ENCODE measurements at regions of chrX and their contacts with region 1.

Region 1: DNA sequence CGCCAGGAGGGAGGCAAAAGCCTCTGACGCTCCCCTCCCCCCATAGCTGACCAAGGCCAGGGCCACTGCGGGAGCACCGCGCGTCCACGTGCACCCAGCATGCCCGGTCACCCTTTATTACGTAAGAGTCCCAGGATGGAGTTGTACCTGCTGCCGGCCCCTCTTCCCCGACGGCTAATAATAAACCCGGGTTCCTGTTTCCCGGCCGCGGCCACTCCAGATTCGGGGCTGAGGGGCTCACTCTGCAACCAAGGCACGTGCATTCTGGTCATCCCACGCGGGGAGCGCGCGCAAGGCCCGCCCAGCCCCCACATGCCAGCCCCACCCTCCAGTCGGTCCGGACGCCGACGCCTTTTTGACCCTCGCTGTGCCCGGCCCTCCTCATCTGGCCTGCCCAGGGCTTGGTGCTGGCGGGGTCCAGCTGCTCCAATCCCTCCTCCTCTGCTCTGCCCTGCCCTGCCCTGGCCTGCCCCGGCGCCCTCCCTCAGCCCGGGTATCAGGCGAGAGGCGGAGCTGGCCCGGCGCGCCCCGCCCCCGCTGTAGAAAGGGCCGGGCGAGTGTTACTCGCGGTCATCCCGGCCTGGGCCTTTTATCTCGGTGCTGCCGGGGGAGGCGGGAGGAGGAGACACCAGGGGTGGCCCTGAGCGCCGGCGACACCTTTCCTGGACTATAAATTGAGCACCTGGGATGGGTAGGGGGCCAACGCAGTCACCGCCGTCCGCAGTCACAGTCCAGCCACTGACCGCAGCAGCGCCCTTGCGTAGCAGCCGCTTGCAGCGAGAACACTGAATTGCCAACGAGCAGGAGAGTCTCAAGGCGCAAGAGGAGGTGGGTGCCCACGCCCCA is 2.5 kb downstream of the MID1IP1 start:
- DNase-seq: peak; percentile 79
- H3K4me3 ChIP-seq: peak overlapping the region; percentile 57 to 76 (median 64)
- H3K27ac ChIP-seq: peak overlapping the region; percentile 78
- H3K4me1 ChIP-seq: peaks cover 18% of the 10 kb centered on the region
- H3K27me3 ChIP-seq: no peaks in the 10 kb centered on the region
- CTCF ChIP-seq: no peak

Region 2: GRCh38 chrX:38484607-38485498 is 319.0 kb before region 1 on chrX:
- CTCF ChIA-PET with region 1: no interaction called
- dilution Hi-C with region 1: no loop called
- in situ Hi-C with region 1: no loop called
- intact Hi-C with region 1: no loop called
- DNase-seq: no peak
- H3K4me3 ChIP-seq: no peak overlapping the region
- H3K27ac ChIP-seq: no peak overlapping the region
- H3K4me1 ChIP-seq: no peaks in the 10 kb centered on the region
- H3K27me3 ChIP-seq: peaks cover 3% of the 10 kb centered on the region
- CTCF ChIP-seq: no peak

Region 3: GRCh38 chrX:38768079-38768478 is 35.7 kb before region 1 on chrX:
- CTCF ChIA-PET with region 1: no interaction called
- dilution Hi-C with region 1: no loop called
- in situ Hi-C with region 1: no loop called
- intact Hi-C with region 1: loop called (anchors 2 kb)
- DNase-seq: peak; percentile 6
- H3K4me3 ChIP-seq: no peak overlapping the region
- H3K27ac ChIP-seq: no peak overlapping the region
- H3K4me1 ChIP-seq: no peaks in the 10 kb centered on the region
- H3K27me3 ChIP-seq: peaks cover 7% of the 10 kb centered on the region
- CTCF ChIP-seq: peak; percentile 29 to 51

Region 4: DNA sequence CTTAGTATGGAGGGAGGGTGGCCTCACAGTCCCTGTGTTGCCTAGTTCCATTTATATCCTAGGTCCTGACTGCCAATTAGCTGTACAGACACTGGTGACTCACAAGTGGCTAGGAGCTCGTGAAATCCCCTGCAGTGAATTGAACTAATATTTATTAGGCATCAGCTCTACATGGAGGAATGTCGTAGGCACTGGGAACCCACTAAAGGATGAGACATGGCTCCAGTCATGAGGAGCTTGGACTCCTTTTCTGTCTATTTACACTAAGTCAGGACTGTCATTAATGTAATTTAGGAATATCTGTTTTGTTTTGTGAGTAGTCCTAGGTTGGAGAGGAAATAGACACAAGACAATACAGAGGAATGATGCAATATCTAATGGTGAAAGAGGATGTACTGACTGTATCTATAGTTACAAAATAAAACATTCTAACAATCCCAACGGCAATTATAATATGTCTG is 65.2 kb after region 1 on chrX:
- CTCF ChIA-PET with region 1: interaction called, 3 read pairs
- dilution Hi-C with region 1: no loop called
- in situ Hi-C with region 1: no loop called
- intact Hi-C with region 1: loop called (anchors 2 kb)
- DNase-seq: peak; percentile 37
- H3K4me3 ChIP-seq: no peak overlapping the region
- H3K27ac ChIP-seq: peak overlapping the region; percentile 86
- H3K4me1 ChIP-seq: peaks cover 13% of the 10 kb centered on the region
- H3K27me3 ChIP-seq: no peaks in the 10 kb centered on the region
- CTCF ChIP-seq: no peak

Region 5: DNA sequence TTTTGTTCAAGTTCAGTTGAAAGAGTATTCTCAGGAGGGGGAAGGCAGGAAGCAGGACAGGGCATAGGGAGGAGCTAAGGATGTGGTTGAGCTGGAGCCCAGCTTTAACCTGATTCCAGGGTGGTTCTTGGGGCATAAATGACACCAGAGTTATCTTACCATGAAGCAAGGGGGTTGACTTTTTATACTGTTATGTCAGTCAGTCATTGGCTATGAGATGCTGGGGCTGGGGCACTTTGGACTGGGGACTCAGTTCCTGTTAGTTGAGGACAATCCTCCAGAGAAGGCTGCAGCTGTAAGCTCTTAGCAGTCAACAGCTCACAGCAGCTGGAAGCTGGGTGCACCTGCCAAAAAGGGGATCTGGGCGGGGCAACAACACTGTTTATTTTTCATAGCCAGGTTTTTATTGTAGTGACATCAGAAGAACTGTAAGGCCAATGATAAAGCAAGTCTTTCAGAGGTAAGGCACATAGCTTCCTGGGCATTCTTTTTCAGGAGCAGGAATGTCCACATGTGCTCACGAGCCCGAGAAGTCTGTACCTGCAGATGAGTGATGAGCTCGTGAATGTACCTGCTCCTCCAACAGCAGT is 75.9 kb after region 1 on chrX:
- CTCF ChIA-PET with region 1: no interaction called
- dilution Hi-C with region 1: no loop called
- in situ Hi-C with region 1: no loop called
- intact Hi-C with region 1: loop called (anchors 2 kb)
- DNase-seq: peak; percentile 51
- H3K4me3 ChIP-seq: no peak overlapping the region
- H3K27ac ChIP-seq: no peak overlapping the region
- H3K4me1 ChIP-seq: peaks cover 20% of the 10 kb centered on the region
- H3K27me3 ChIP-seq: no peaks in the 10 kb centered on the region
- CTCF ChIP-seq: no peak

Region 6: GRCh38 chrX:39073131-39073530 is 269.3 kb after region 1 on chrX:
- CTCF ChIA-PET with region 1: no interaction called
- dilution Hi-C with region 1: no loop called
- in situ Hi-C with region 1: no loop called
- intact Hi-C with region 1: loop called (anchors 10 kb)
- DNase-seq: peak; percentile 64
- H3K4me3 ChIP-seq: no peak overlapping the region
- H3K27ac ChIP-seq: no peak overlapping the region
- H3K4me1 ChIP-seq: peaks cover 5% of the 10 kb centered on the region
- H3K27me3 ChIP-seq: no peaks in the 10 kb centered on the region
- CTCF ChIP-seq: no peak

Region 7: DNA sequence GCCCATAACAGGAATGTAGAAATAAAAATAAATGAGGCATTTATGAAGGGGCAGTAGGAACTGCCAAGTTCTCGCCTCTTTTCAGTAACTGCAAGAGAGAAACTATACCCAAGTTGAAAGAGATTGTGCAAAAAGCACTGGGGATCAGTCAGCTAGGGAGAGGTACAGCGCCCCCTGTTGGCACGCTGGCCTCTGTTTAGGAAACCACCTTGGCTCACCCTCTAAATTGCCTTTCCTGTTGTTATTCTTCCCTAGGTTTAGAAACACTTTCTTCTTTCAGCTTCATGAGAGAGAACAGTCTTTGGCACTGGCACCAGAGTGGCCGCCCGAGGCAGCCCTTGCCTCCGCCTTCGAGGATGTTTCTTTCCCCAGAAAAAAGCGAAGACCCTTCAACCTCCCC is 346.0 kb after region 1 on chrX:
- CTCF ChIA-PET with region 1: interaction called, 10 read pairs
- dilution Hi-C with region 1: no loop called
- in situ Hi-C with region 1: no loop called
- intact Hi-C with region 1: loop called (anchors 1 kb)
- DNase-seq: peak; percentile 12
- H3K4me3 ChIP-seq: no peak overlapping the region
- H3K27ac ChIP-seq: no peak overlapping the region
- H3K4me1 ChIP-seq: no peaks in the 10 kb centered on the region
- H3K27me3 ChIP-seq: no peaks in the 10 kb centered on the region
- CTCF ChIP-seq: peak; percentile 63 to 85

Measured in mammary epithelial cell (primary cell).